Naive thymus-derived CD4-positive, alpha-beta T cell (primary cell): ENCODE measurements at regions of chr11 and their contacts with region 1.

Region 1: GRCh38 chr11:118227865-118228785 is 3.3 kb upstream of the JAML start:
- DNase-seq: peak in 4 of 9 donors; percentile 23 to 49 (median 41)
- ATAC-seq: peak; percentile 34
- H3K4me3 ChIP-seq: peak overlapping the region; percentile 4
- H3K4me3 Mint-ChIP-seq: peak overlapping the region in 9 of 10 donors; percentile 3 to 77 (median 66)
- H3K27ac ChIP-seq: peak overlapping the region; percentile 61
- H3K27ac Mint-ChIP-seq: peak overlapping the region in 1 of 9 donors; percentile 91
- H3K4me1 ChIP-seq: peaks cover 59 to 70% of the 10 kb centered on the region in 2 donors
- H3K4me1 Mint-ChIP-seq: peaks cover 10 to 55% (median 46%) of the 10 kb centered on the region in 7 donors
- H3K27me3 ChIP-seq: no peaks in the 10 kb centered on the region
- H3K27me3 Mint-ChIP-seq: no peaks in the 10 kb centered on the region

Region 2: DNA sequence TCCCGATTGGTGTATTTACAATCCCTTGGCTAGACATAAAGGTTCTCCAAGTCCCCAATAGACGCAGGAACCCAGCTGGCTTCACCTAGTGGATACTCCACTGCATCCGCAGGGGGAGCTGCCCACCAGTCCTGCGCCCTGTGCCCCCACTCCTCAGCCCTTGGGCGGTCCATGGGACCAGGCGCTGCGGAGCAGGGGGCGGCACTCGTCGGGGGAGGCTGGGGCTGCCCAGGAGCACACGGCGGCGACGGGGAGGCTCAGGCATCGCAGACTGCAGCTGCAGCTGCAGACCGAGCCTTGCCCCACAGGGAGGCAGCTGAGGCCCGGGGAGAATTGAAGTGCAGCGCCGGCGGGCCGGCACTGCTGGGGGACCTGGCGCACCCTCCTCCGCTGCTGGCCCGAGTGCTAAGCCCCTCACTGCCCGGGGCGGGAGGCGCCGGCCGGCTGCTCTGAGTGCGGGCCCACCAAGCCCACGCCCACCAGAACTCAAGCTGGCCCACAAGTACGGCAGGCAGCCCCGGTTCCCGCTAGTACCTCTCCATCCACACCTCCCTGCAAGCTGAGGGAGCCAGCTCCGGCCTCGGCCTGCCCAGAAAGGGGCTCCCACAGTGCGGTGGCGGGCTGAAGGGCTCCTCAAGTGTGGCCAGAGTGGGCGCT is 1117.7 kb before region 1 on chr11:
- CTCF ChIA-PET with region 1: no interaction called
- POLR2A ChIA-PET with region 1: no interaction called
- intact Hi-C with region 1: no loop called
- DNase-seq: no peak
- ATAC-seq: no peak
- H3K4me3 ChIP-seq: no peak overlapping the region
- H3K4me3 Mint-ChIP-seq: no peak overlapping the region
- H3K27ac ChIP-seq: no peak overlapping the region
- H3K27ac Mint-ChIP-seq: no peak overlapping the region
- H3K4me1 ChIP-seq: no peaks in the 10 kb centered on the region
- H3K4me1 Mint-ChIP-seq: peaks cover 0 to 5% (median 0%) of the 10 kb centered on the region in 7 donors
- H3K27me3 ChIP-seq: no peaks in the 10 kb centered on the region
- H3K27me3 Mint-ChIP-seq: peaks cover 0 to 7% (median 0%) of the 10 kb centered on the region in 5 donors

Region 3: DNA sequence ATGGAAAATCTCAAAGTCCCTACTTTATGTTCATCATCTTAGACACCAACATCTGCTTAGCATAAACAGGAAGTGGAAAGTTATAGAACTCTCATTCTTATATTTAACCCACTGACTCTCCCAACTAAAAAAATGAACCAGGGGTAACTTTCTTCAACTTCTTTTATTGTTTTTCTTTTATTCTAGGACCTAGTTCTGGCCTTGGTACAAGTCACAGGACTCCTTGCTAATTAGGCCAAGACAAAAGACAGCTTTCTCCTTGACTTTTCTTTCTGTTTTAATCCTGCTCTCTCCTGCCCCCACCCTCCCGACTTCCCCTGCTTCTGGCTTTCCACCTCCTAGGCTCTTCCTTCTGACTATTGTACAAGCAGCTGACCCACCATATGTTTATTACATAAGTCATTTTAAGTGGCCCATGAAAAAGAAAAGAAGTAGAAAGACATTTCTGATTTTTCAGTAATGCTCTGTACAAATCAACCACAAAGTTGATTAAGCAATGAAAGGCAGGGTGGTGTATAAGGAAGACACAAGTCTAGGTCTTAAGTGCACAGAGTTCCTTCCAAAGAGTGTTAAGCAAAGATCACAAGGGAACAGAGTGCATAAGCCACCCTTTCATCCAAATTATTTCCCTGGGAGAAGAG is 21.6 kb before region 1 on chr11:
- CTCF ChIA-PET with region 1: interaction called, 25 read pairs
- POLR2A ChIA-PET with region 1: interaction called, 64 read pairs
- intact Hi-C with region 1: loop called (anchors 1 kb)
- DNase-seq: peak in 1 of 9 donors; percentile 20
- ATAC-seq: peak; percentile 46
- H3K4me3 ChIP-seq: no peak overlapping the region
- H3K4me3 Mint-ChIP-seq: peak overlapping the region; percentile 20 to 82 (median 54)
- H3K27ac ChIP-seq: peak overlapping the region; percentile 44
- H3K27ac Mint-ChIP-seq: peak overlapping the region in 8 of 9 donors; percentile 61 to 94 (median 88)
- H3K4me1 ChIP-seq: peaks cover 38 to 45% of the 10 kb centered on the region in 2 donors
- H3K4me1 Mint-ChIP-seq: peaks cover 5 to 49% (median 13%) of the 10 kb centered on the region in 7 donors
- H3K27me3 ChIP-seq: no peaks in the 10 kb centered on the region
- H3K27me3 Mint-ChIP-seq: no peaks in the 10 kb centered on the region

Region 4: DNA sequence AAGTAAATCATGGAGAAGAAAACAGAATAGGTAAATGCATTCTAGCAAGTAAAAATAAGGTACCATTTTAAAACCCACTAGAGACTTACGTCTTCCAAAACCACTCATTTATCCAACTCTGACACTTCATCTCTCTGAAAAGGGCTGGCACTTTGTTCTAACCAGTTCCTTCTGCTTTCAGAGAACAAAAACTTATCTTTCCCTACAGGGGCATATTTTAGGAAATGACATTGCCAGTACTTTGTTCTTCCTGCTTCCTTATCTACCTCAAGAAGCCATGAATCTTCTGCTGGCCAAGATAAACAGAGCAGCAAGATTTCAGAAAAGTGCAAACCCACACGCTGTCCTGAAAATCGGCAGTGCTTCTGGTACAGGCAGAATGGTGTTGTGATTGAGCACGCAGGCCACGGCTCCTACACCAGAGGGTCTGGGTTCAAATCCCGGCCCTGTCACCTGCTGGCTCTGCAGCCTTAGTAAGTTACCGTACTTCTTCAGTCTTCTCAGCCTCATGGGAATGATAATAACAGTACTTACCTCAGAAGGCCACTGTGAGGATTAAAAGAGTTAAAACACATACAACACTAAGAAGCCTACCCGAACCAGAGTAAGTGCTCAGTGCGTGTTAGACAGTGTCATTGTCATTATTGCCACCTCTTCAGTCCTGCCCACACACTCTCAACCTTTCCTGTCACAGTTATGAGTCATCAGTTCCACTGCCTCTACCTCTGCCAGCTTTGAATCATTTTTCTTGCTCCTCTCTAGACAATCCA is 13.1 kb after region 1 on chr11:
- CTCF ChIA-PET with region 1: interaction called, 9 read pairs
- POLR2A ChIA-PET with region 1: interaction called, 45 read pairs
- intact Hi-C with region 1: loop called (anchors 1 kb)
- DNase-seq: peak in 4 of 9 donors; percentile 45 to 75 (median 53)
- ATAC-seq: peak; percentile 91
- H3K4me3 ChIP-seq: peak overlapping the region; percentile 8
- H3K4me3 Mint-ChIP-seq: peak overlapping the region; percentile 27 to 74 (median 54)
- H3K27ac ChIP-seq: peak overlapping the region; percentile 49
- H3K27ac Mint-ChIP-seq: peak overlapping the region; percentile 52 to 93 (median 83)
- H3K4me1 ChIP-seq: peaks cover 33 to 50% of the 10 kb centered on the region in 2 donors
- H3K4me1 Mint-ChIP-seq: peaks cover 54 to 76% (median 70%) of the 10 kb centered on the region in 7 donors
- H3K27me3 ChIP-seq: no peaks in the 10 kb centered on the region
- H3K27me3 Mint-ChIP-seq: no peaks in the 10 kb centered on the region

Region 5: GRCh38 chr11:118263695-118264567 is 35.8 kb after region 1 on chr11 and contains the start of gene MPZL2:
- CTCF ChIA-PET with region 1: interaction called, 4 read pairs
- POLR2A ChIA-PET with region 1: interaction called, 18 read pairs
- intact Hi-C with region 1: no loop called
- DNase-seq: peak in 8 of 9 donors; percentile 11 to 47 (median 28)
- ATAC-seq: peak; percentile 72
- H3K4me3 ChIP-seq: peak within 1 kb of the TSS; percentile 29
- H3K4me3 Mint-ChIP-seq: peak within 1 kb of the TSS; percentile 78 to 91 (median 88)
- H3K27ac ChIP-seq: peak within 1 kb of the TSS; percentile 55
- H3K27ac Mint-ChIP-seq: peak within 1 kb of the TSS; percentile 30 to 94 (median 75)
- H3K4me1 ChIP-seq: peaks cover 0 to 14% of the 10 kb centered on the region in 2 donors
- H3K4me1 Mint-ChIP-seq: peaks cover 19 to 44% (median 37%) of the 10 kb centered on the region in 7 donors
- H3K27me3 ChIP-seq: no peaks in the 10 kb centered on the region
- H3K27me3 Mint-ChIP-seq: peaks cover 0 to 19% (median 0%) of the 10 kb centered on the region in 5 donors
- total RNA-seq, gene MPZL2: 0.69 to 5.9 (median 1.6) TPM

Region 6: GRCh38 chr11:118304568-118305248 is 76.6 kb after region 1 on chr11 and contains the start of gene CD3E:
- CTCF ChIA-PET with region 1: interaction called, 4 read pairs
- POLR2A ChIA-PET with region 1: interaction called, 21 read pairs
- intact Hi-C with region 1: no loop called
- DNase-seq: peak; percentile 31 to 83 (median 79)
- ATAC-seq: peak; percentile 83
- H3K4me3 ChIP-seq: peak within 1 kb of the TSS; percentile 88
- H3K4me3 Mint-ChIP-seq: peak within 1 kb of the TSS; percentile 95 to 100 (median 99)
- H3K27ac ChIP-seq: peak within 1 kb of the TSS; percentile 92
- H3K27ac Mint-ChIP-seq: peak within 1 kb of the TSS; percentile 97 to 100 (median 100)
- H3K4me1 ChIP-seq: peaks cover 41 to 62% of the 10 kb centered on the region in 2 donors
- H3K4me1 Mint-ChIP-seq: peaks cover 54 to 91% (median 78%) of the 10 kb centered on the region in 7 donors
- H3K27me3 ChIP-seq: no peaks in the 10 kb centered on the region
- H3K27me3 Mint-ChIP-seq: no peaks in the 10 kb centered on the region
- total RNA-seq, gene CD3E: 392 to 706 (median 670) TPM

Region 7: GRCh38 chr11:118343981-118344515 is 115.9 kb after region 1 on chr11 and contains the start of gene CD3G:
- CTCF ChIA-PET with region 1: interaction called, 4 read pairs
- POLR2A ChIA-PET with region 1: interaction called, 16 read pairs
- intact Hi-C with region 1: loop called in 1 of 2 experiments (anchors 2 kb)
- DNase-seq: peak; percentile 39 to 83 (median 77)
- ATAC-seq: peak; percentile 88
- H3K4me3 ChIP-seq: peak within 1 kb of the TSS; percentile 88
- H3K4me3 Mint-ChIP-seq: peak within 1 kb of the TSS; percentile 89 to 98 (median 96)
- H3K27ac ChIP-seq: peak within 1 kb of the TSS; percentile 96
- H3K27ac Mint-ChIP-seq: peak within 1 kb of the TSS; percentile 84 to 100 (median 98)
- H3K4me1 ChIP-seq: peaks cover 22 to 35% of the 10 kb centered on the region in 2 donors
- H3K4me1 Mint-ChIP-seq: peaks cover 43 to 77% (median 65%) of the 10 kb centered on the region in 7 donors
- H3K27me3 ChIP-seq: no peaks in the 10 kb centered on the region
- H3K27me3 Mint-ChIP-seq: no peaks in the 10 kb centered on the region
- total RNA-seq, gene CD3G: 122 to 220 (median 192) TPM